Naive thymus-derived CD4-positive, alpha-beta T cell (primary cell): ENCODE measurements at regions of chr7 and their contacts with region 1.

Region 1: GRCh38 chr7:135509903-135510602 is at the start of gene CNOT4:
- DNase-seq: peak; percentile 82 to 97 (median 92)
- ATAC-seq: peak; percentile 96
- H3K4me3 ChIP-seq: peak within 1 kb of the TSS; percentile 78
- H3K4me3 Mint-ChIP-seq: no peak within 1 kb of the TSS
- H3K27ac ChIP-seq: peak within 1 kb of the TSS; percentile 97
- H3K27ac Mint-ChIP-seq: no peak within 1 kb of the TSS
- H3K4me1 ChIP-seq: peaks cover 12 to 15% of the 10 kb centered on the region in 2 donors
- H3K4me1 Mint-ChIP-seq: peaks cover 3 to 21% (median 14%) of the 10 kb centered on the region in 7 donors
- H3K27me3 ChIP-seq: no peaks in the 10 kb centered on the region
- H3K27me3 Mint-ChIP-seq: no peaks in the 10 kb centered on the region
- total RNA-seq, gene CNOT4: 28.7 to 39.4 (median 38.3) TPM

Region 2: GRCh38 chr7:134986363-134987251 is 523.4 kb before region 1 on chr7 and contains the start of gene AGBL3:
- CTCF ChIA-PET with region 1: no interaction called
- POLR2A ChIA-PET with region 1: no interaction called
- intact Hi-C with region 1: loop called (anchors 1 to 5 kb)
- DNase-seq: peak; percentile 80 to 92 (median 89)
- ATAC-seq: peak; percentile 94
- H3K4me3 ChIP-seq: peak within 1 kb of the TSS; percentile 92
- H3K4me3 Mint-ChIP-seq: peak within 1 kb of the TSS; percentile 93 to 100 (median 98)
- H3K27ac ChIP-seq: peak within 1 kb of the TSS; percentile 96
- H3K27ac Mint-ChIP-seq: peak within 1 kb of the TSS; percentile 97 to 100 (median 99)
- H3K4me1 ChIP-seq: no peaks in the 10 kb centered on the region
- H3K4me1 Mint-ChIP-seq: peaks cover 20 to 61% (median 52%) of the 10 kb centered on the region in 7 donors
- H3K27me3 ChIP-seq: no peaks in the 10 kb centered on the region
- H3K27me3 Mint-ChIP-seq: no peaks in the 10 kb centered on the region
- total RNA-seq, gene AGBL3: 2.1 to 6.6 (median 3.8) TPM

Region 3: GRCh38 chr7:135281363-135281949 is 228.6 kb before region 1 on chr7:
- CTCF ChIA-PET with region 1: no interaction called
- POLR2A ChIA-PET with region 1: no interaction called
- intact Hi-C with region 1: loop called (anchors 1 kb)
- DNase-seq: peak; percentile 26 to 81 (median 73)
- ATAC-seq: peak; percentile 99
- H3K4me3 ChIP-seq: no peak overlapping the region
- H3K4me3 Mint-ChIP-seq: peak overlapping the region in 3 of 10 donors; percentile 4 to 42 (median 8)
- H3K27ac ChIP-seq: no peak overlapping the region
- H3K27ac Mint-ChIP-seq: peak overlapping the region in 2 of 9 donors; percentile 11 to 51
- H3K4me1 ChIP-seq: no peaks in the 10 kb centered on the region
- H3K4me1 Mint-ChIP-seq: peaks cover 4 to 17% (median 12%) of the 10 kb centered on the region in 7 donors
- H3K27me3 ChIP-seq: no peaks in the 10 kb centered on the region
- H3K27me3 Mint-ChIP-seq: peaks cover 4 to 10% (median 9%) of the 10 kb centered on the region in 5 donors

Region 4: DNA sequence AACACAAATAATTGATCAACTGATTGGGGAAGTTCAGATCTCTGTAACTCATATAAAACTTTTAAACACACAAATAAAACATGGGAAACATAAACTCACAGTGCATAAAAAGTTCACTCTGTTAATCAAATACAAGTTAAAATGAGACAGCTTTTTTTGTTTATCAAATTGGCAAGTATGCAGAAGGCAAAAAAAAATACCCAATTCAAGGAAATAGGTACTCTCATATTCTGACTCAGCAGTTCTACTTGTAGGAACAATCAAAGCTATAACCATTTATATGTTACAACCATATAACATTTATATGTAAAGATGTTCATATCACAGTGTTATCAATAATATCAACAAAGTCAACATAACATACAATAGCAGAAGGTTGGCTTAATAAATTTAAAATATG is 102.2 kb before region 1 on chr7:
- CTCF ChIA-PET with region 1: no interaction called
- POLR2A ChIA-PET with region 1: no interaction called
- intact Hi-C with region 1: no loop called
- DNase-seq: no peak
- ATAC-seq: no peak
- H3K4me3 ChIP-seq: no peak overlapping the region
- H3K4me3 Mint-ChIP-seq: no peak overlapping the region
- H3K27ac ChIP-seq: no peak overlapping the region
- H3K27ac Mint-ChIP-seq: no peak overlapping the region
- H3K4me1 ChIP-seq: no peaks in the 10 kb centered on the region
- H3K4me1 Mint-ChIP-seq: peaks cover 0 to 15% (median 5%) of the 10 kb centered on the region in 7 donors
- H3K27me3 ChIP-seq: no peaks in the 10 kb centered on the region
- H3K27me3 Mint-ChIP-seq: no peaks in the 10 kb centered on the region

Region 5: DNA sequence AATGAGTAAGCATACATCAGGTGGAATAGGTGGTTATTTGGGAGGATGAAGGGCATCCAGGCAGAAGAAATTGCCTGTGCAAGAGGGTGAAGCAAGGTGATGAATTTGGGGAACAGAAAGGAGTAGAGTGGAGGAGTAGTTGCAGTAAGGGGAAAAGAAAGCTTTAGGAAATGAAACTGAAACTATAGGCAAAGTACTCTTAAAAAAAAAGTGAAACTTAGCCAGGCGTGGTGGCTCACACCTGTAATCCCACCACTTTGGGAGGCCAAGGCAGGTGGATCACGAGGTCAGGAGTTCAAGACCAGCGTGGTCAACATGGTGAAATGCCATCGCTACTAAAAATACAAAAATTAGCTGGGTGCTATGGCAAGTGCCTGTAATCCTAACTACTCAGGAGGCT is 65.2 kb after region 1 on chr7:
- CTCF ChIA-PET with region 1: no interaction called
- POLR2A ChIA-PET with region 1: no interaction called
- intact Hi-C with region 1: loop called in 1 of 2 experiments (anchors 5 kb)
- DNase-seq: no peak
- ATAC-seq: no peak
- H3K4me3 ChIP-seq: no peak overlapping the region
- H3K4me3 Mint-ChIP-seq: peak overlapping the region in 1 of 10 donors; percentile 48
- H3K27ac ChIP-seq: no peak overlapping the region
- H3K27ac Mint-ChIP-seq: peak overlapping the region in 5 of 9 donors; percentile 7 to 87 (median 66)
- H3K4me1 ChIP-seq: no peaks in the 10 kb centered on the region
- H3K4me1 Mint-ChIP-seq: peaks cover 9 to 22% (median 13%) of the 10 kb centered on the region in 7 donors
- H3K27me3 ChIP-seq: no peaks in the 10 kb centered on the region
- H3K27me3 Mint-ChIP-seq: no peaks in the 10 kb centered on the region

Region 6: GRCh38 chr7:135662373-135663114 is 152.5 kb after region 1 on chr7 and contains the start of gene STMP1:
- CTCF ChIA-PET with region 1: no interaction called
- POLR2A ChIA-PET with region 1: interaction called, 6 read pairs
- intact Hi-C with region 1: loop called (anchors 1 kb)
- DNase-seq: peak; percentile 89 to 97 (median 94)
- ATAC-seq: peak; percentile 99
- H3K4me3 ChIP-seq: peak within 1 kb of the TSS; percentile 91
- H3K4me3 Mint-ChIP-seq: peak within 1 kb of the TSS; percentile 86 to 98 (median 94)
- H3K27ac ChIP-seq: peak within 1 kb of the TSS; percentile 82
- H3K27ac Mint-ChIP-seq: peak within 1 kb of the TSS; percentile 80 to 95 (median 93)
- H3K4me1 ChIP-seq: peaks cover 6 to 15% of the 10 kb centered on the region in 2 donors
- H3K4me1 Mint-ChIP-seq: peaks cover 32 to 49% (median 43%) of the 10 kb centered on the region in 7 donors
- H3K27me3 ChIP-seq: no peaks in the 10 kb centered on the region
- H3K27me3 Mint-ChIP-seq: no peaks in the 10 kb centered on the region
- total RNA-seq, gene STMP1: 18.0 to 33.0 (median 24.7) TPM